ENCODE measurements at regions of chr1 and their contacts with region 1.

Region 1: GRCh38 chr1:66503841-66504470 is 30.0 kb upstream of the SGIP1 start:
- DNase-seq: peak in 1 of 2 experiments; percentile 22
- H3K4me3 ChIP-seq: no peak overlapping the region
- H3K27ac ChIP-seq: no peak overlapping the region
- H3K4me1 ChIP-seq: no peaks in the 10 kb centered on the region
- H3K27me3 ChIP-seq: no peaks in the 10 kb centered on the region
- CTCF ChIP-seq: peak; percentile 70

Region 2: DNA sequence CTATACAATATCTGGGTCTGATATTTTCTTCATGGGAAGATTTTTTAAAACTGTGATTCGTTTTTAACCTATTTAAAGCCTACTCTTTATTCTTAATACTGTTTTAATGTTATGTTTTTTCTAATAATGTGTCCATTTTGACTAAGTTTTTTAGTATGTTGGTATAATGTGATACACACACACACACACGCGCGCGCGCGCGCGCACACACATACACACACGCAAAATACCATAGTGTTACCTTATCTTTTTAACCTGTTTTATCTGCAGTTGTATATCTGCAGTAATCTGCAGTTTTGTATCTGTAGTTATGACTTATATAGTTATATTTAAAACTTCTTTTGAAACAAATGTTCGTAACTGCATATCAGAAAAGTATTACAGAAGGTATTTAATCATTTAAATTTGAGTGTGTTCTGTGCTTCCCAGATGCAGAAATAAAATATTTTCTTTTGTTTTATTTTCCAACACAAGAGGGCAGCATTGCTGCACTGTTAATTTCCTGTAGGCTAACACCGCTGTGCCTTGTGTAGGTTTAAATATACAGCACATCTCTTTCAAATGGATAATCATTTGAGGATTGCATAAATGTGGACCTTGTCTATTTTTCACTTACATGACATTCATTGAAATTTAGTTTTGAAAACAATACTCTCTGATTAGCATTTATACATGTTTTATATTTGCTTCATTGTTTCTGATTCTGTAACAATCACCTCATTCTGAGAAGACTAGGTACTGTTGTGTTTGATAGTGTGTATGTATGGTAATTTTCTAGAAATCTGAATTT is 545.2 kb before region 1 on chr1:
- CTCF ChIA-PET with region 1: no interaction called
- POLR2A ChIA-PET with region 1: no interaction called
- intact Hi-C with region 1: loop called (anchors 2 kb)
- DNase-seq: no peak
- H3K4me3 ChIP-seq: no peak overlapping the region
- H3K27ac ChIP-seq: no peak overlapping the region
- H3K4me1 ChIP-seq: no peaks in the 10 kb centered on the region
- H3K27me3 ChIP-seq: no peaks in the 10 kb centered on the region
- CTCF ChIP-seq: peak; percentile 85

Region 3: DNA sequence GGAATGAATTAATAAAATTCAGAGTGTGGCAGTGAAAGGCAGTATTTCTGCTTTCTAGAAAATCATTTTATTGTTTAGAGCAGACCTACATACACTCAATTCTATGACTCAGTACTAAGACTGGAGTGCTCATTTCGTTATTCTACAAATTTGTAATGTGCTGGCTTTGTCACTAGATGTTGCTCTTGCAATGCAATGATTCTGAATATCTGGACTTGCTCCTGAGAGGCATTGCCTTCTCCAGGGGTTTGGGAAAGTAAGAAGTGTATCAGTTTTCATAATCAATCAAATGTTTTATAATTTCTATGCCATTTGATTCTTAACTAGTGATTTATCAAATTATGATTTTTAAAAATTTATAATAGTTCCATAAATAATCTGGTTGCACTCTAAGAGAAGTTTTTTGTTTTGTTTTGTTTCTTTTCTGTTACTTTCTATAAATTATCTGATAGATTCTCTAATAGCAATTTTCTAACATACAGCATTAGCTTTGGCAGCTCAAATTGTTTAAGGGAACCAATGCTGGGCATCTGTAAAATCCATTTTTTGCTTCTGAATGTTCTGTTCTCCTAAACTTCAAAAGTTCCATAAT is 250.5 kb before region 1 on chr1:
- CTCF ChIA-PET with region 1: no interaction called
- POLR2A ChIA-PET with region 1: no interaction called
- intact Hi-C with region 1: loop called (anchors 1 kb)
- DNase-seq: no peak
- H3K4me3 ChIP-seq: no peak overlapping the region
- H3K27ac ChIP-seq: no peak overlapping the region
- H3K4me1 ChIP-seq: no peaks in the 10 kb centered on the region
- H3K27me3 ChIP-seq: no peaks in the 10 kb centered on the region
- CTCF ChIP-seq: peak; percentile 74

Region 4: DNA sequence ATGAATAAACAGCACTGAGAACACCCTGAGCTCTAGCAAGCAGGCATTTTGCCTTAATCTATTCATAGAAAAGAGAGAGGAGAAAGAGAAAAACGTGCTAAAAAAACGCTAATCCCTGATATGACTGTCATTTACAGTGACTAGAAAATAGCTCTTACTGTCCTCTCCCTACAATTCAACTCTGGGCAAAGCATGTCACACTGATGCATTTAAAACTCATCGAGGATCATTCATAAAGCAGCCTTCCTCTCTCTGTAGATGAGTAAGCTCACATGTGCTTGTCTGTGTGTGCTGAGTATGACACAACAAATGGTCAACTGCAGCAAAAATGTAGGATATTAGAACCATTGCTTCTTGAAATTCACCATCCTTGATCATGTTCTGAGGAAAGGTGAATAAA is 139.0 kb after region 1 on chr1:
- CTCF ChIA-PET with region 1: no interaction called
- POLR2A ChIA-PET with region 1: no interaction called
- intact Hi-C with region 1: loop called (anchors 5 kb)
- DNase-seq: no peak
- H3K4me3 ChIP-seq: no peak overlapping the region
- H3K27ac ChIP-seq: no peak overlapping the region
- H3K4me1 ChIP-seq: no peaks in the 10 kb centered on the region
- H3K27me3 ChIP-seq: no peaks in the 10 kb centered on the region
- CTCF ChIP-seq: no peak

Region 5: GRCh38 chr1:66725885-66726665 is 222.1 kb after region 1 on chr1:
- CTCF ChIA-PET with region 1: no interaction called
- POLR2A ChIA-PET with region 1: no interaction called
- intact Hi-C with region 1: loop called (anchors 5 kb)
- DNase-seq: peak; percentile 41 to 42
- H3K4me3 ChIP-seq: no peak overlapping the region
- H3K27ac ChIP-seq: no peak overlapping the region
- H3K4me1 ChIP-seq: no peaks in the 10 kb centered on the region
- H3K27me3 ChIP-seq: no peaks in the 10 kb centered on the region
- CTCF ChIP-seq: peak; percentile 96

Measured in PC-9 (cell line).